GM10248 (cell line): ENCODE measurements at regions of chr12 and their contacts with region 1.

Region 1: DNA sequence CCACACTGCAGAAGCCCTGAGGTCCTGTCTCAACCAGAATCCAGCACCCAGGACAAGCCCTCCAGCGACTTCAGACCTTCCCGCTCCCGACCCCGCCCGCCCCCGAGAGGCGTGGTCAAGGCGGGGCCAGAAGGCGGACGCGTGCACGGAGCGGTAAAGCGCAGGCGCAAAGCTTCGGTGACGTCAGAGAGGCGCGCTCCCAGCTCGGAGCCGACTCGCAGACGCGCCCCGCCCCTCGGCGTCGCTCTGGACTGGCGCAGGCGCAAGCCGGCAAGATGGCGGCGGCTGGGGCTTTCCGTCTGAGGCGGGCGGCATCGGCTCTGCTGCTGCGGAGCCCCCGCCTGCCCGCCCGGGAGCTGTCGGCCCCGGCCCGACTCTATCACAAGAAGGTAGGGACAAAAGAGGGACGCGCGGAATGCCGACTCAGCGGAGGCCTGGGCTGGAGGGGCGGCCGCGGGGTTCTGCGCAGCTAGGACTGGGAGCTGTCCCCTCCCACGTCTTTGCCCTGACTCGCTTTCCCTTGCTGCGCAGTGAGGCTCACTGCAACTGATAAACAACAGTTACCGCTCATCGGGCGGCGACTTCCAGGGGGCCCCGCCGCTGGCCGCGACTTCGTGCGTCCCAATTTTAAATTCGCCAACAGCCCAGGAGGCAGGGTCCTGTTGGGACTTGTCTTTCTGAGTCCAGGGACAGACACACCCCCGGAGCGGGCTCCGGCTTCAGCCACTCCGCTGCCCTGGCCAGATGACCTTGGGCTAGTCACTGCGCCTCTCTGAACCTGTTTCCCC is at the start of gene ISCU:
- DNase-seq: peak; percentile 98
- CTCF ChIP-seq: no peak

Region 2: GRCh38 chr12:108313606-108314351 is 248.8 kb before region 1 on chr12:
- CTCF ChIA-PET with region 1: no interaction called
- POLR2A ChIA-PET with region 1: no interaction called
- DNase-seq: no peak
- CTCF ChIP-seq: no peak

Region 3: GRCh38 chr12:108576660-108577234 is 14.2 kb after region 1 on chr12:
- CTCF ChIA-PET with region 1: interaction called, 14 read pairs
- POLR2A ChIA-PET with region 1: no interaction called
- DNase-seq: no peak
- CTCF ChIP-seq: no peak

Region 4: DNA sequence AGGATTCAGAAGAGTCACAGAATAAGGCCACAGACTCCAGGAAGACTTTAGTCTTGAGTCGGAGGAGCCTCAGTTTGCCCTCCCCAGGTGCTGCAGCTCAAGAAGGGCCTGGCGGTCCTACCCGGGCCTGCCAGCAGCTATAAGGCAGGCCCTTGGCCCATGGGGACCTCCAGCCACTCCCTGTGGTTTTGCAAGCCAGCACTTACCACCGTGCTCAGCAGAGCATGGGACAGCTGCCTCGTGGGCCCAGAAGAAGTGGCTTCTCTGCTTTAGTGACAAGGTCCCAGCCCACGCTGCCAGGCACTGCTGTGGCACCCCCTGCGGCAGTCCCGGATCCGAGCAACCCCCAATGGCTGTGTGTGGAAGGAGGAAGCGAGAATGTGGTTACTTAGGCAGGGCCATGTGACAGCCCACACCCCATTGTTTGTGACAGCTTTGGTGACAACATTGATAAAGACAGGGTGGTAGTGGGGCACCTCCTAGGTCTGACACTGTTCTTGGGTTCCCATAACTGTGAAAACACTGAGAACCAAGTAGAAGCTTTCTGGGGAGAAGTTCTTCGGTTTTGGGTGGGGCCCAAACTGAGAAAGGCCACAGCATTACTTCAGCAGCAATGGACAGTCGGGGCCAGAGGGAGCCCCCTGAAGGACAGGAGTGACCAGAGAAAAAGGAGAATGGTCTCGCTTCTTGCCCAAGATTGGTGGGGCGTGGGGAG is 71.1 kb after region 1 on chr12 and contains the start of gene SELPLG:
- CTCF ChIA-PET with region 1: interaction called, 13 read pairs
- POLR2A ChIA-PET with region 1: interaction called, 4 read pairs
- DNase-seq: peak; percentile 87
- CTCF ChIP-seq: peak; percentile 20

Region 5: DNA sequence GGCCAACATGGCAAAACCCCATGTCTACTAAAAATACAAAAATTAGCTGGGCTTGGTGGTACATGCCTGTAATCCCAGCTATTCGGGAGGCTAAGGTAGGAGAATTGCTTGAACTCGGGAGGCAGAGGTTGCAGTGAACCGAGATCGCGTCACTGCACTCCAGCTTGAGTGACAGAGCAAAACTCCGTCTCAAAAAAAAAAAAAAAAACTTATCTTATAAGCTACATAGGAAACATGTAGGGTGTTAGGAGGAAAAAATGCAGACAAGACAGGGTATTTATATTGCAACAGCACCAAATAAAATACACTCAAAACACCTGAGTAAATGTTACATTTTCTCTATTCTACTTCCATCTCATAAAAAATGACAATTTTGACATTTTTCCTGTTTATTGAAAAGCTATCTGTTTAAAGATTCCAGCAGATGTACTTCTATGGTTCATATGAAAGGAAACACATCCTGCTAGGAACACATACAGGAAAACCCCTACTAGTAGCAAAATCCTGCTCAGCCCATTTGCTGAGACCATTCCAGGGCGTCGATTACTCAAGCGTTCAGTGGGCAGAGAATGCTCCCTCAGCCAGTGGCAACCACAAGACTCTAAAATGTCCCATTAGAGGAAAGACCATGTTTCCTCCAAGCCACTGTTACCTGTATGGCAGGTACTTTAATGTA is 149.1 kb after region 1 on chr12:
- CTCF ChIA-PET with region 1: no interaction called
- POLR2A ChIA-PET with region 1: no interaction called
- DNase-seq: no peak
- CTCF ChIP-seq: no peak